Naive thymus-derived CD4-positive, alpha-beta T cell (primary cell): ENCODE measurements at regions of chr1 and their contacts with region 1.

Region 1: GRCh38 chr1:89762779-89763648 is 57.8 kb upstream of the LRRC8D start:
- DNase-seq: peak; percentile 76 to 88 (median 84)
- ATAC-seq: peak; percentile 100
- H3K4me3 ChIP-seq: peak overlapping the region; percentile 59
- H3K4me3 Mint-ChIP-seq: peak overlapping the region; percentile 76 to 96 (median 91)
- H3K27ac ChIP-seq: peak overlapping the region; percentile 50
- H3K27ac Mint-ChIP-seq: peak overlapping the region; percentile 76 to 95 (median 89)
- H3K4me1 ChIP-seq: peaks cover 18 to 37% of the 10 kb centered on the region in 2 donors
- H3K4me1 Mint-ChIP-seq: peaks cover 34 to 57% (median 55%) of the 10 kb centered on the region in 7 donors
- H3K27me3 ChIP-seq: no peaks in the 10 kb centered on the region
- H3K27me3 Mint-ChIP-seq: peaks cover 0 to 4% (median 0%) of the 10 kb centered on the region in 5 donors

Region 2: GRCh38 chr1:89483010-89483756 is 279.8 kb before region 1 on chr1:
- CTCF ChIA-PET with region 1: interaction called, 83 read pairs
- POLR2A ChIA-PET with region 1: interaction called, 4 read pairs
- intact Hi-C with region 1: loop called (anchors 1 kb)
- DNase-seq: peak; percentile 37 to 77 (median 67)
- ATAC-seq: peak; percentile 97
- H3K4me3 ChIP-seq: no peak overlapping the region
- H3K4me3 Mint-ChIP-seq: no peak overlapping the region
- H3K27ac ChIP-seq: no peak overlapping the region
- H3K27ac Mint-ChIP-seq: no peak overlapping the region
- H3K4me1 ChIP-seq: no peaks in the 10 kb centered on the region
- H3K4me1 Mint-ChIP-seq: peaks cover 0 to 18% (median 9%) of the 10 kb centered on the region in 7 donors
- H3K27me3 ChIP-seq: no peaks in the 10 kb centered on the region
- H3K27me3 Mint-ChIP-seq: peaks cover 0 to 5% (median 0%) of the 10 kb centered on the region in 5 donors

Region 3: DNA sequence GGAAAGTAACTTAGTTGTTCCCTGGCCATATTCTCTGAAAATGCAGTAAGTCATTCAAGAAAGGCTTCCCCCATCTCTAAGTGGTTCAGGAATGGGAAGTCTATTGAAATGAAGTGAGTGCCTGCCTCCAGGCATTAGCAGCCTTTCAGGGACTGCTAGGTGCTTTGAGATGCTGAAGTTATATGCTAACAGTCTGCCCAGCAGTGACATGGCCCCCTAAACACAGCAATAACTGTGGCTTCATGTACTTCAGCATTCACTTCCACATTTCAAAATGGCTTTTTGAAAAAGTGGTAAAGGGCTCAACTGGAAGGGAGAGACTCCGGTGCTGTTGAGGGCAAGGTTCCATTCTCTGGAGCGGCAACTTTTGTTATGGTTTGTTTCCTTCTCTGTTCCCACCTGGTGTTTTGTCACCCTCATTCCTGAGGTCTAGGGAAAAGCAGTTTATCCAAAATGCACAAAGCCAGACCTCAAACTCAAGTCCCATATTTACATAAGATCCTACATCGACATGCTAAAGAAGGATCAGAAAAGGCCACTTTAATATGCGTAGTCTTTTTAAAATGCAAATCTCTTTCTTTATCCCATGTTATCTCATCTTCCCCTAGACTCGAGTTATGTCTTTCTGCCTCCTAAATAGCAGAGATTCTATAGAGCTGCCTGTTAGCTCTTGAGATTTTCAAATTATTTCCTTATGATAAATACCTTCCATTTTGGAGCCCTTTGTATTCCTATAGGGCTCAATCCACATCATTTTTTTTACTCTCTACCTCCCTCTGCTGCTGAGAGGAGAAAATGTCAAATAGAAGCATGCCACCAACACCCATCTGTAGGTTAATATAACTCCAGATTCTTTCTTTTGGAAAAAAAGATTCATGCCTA is 164.3 kb before region 1 on chr1:
- CTCF ChIA-PET with region 1: interaction called, 7 read pairs
- POLR2A ChIA-PET with region 1: interaction called, 18 read pairs
- intact Hi-C with region 1: loop called (anchors 1 kb)
- DNase-seq: peak in 5 of 9 donors; percentile 19 to 43 (median 35)
- ATAC-seq: peak; percentile 82
- H3K4me3 ChIP-seq: no peak overlapping the region
- H3K4me3 Mint-ChIP-seq: peak overlapping the region in 8 of 10 donors; percentile 1 to 67 (median 48)
- H3K27ac ChIP-seq: no peak overlapping the region
- H3K27ac Mint-ChIP-seq: peak overlapping the region; percentile 51 to 99 (median 79)
- H3K4me1 ChIP-seq: peaks cover 17 to 55% of the 10 kb centered on the region in 2 donors
- H3K4me1 Mint-ChIP-seq: peaks cover 42 to 98% (median 92%) of the 10 kb centered on the region in 7 donors
- H3K27me3 ChIP-seq: no peaks in the 10 kb centered on the region
- H3K27me3 Mint-ChIP-seq: no peaks in the 10 kb centered on the region

Region 4: DNA sequence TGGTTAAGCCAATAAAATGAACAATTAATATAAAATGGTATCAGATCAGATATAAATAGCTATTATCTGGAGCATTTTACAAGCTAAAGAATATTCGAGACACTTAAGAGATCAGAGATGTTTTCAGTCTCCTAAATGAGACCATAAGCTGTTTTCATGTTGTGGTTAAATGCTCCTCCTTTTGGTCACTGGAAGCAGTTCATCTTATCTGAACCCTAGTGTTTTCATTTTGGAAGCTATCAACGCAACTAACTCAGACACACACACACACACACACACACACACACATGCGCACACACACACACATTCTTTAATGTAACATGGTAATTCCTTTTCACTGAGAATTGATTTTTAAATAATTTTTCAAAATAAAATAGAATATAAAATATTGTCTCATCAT is 140.1 kb before region 1 on chr1:
- CTCF ChIA-PET with region 1: interaction called, 122 read pairs
- POLR2A ChIA-PET with region 1: interaction called, 101 read pairs
- intact Hi-C with region 1: no loop called
- DNase-seq: peak in 5 of 9 donors; percentile 29 to 58 (median 39)
- ATAC-seq: peak; percentile 71
- H3K4me3 ChIP-seq: no peak overlapping the region
- H3K4me3 Mint-ChIP-seq: peak overlapping the region in 3 of 10 donors; percentile 16 to 54 (median 31)
- H3K27ac ChIP-seq: no peak overlapping the region
- H3K27ac Mint-ChIP-seq: peak overlapping the region in 8 of 9 donors; percentile 35 to 98 (median 78)
- H3K4me1 ChIP-seq: peaks cover 9 to 22% of the 10 kb centered on the region in 2 donors
- H3K4me1 Mint-ChIP-seq: peaks cover 15 to 78% (median 61%) of the 10 kb centered on the region in 7 donors
- H3K27me3 ChIP-seq: no peaks in the 10 kb centered on the region
- H3K27me3 Mint-ChIP-seq: no peaks in the 10 kb centered on the region

Region 5: DNA sequence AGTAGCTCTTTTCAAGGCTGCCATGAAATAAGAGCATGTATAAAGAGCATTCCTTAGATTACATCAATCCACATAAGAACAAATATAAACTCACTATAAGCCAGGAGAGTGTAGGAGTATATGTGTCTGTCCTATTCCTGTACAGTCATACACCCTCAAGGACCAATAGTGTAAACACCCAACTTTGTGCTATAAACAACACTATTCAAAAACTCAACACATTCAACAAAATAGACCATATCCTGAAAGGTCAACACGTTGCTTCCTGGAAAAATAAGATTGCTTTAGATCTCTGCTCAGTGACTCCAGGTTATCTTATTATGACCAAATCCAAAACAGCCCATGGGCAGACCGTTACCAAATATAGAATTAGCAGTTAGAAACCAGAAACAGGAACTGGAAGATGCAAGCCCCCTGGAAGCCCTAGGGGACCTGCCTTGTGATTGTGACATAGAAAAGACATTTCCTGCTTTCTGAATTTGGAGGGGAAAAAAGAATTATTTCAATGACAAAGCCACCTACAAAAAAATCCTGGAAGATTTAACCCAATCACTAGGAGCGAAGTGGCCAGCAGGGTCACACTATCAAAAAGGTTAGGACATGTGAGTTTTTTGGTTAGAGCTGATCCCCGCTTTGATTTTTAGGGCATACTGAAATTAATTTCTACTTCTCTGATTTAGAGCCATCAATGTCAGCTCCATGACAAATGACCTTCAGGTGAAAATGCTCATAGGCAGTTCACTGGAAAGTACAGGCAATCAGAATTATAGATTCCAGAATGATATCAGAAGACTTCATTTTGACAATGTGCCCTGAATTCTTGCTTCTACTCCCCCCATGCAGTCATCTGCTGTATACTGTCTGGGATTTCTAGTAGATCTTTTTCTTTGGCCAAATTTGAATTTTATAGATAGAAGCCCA is 70.2 kb before region 1 on chr1:
- CTCF ChIA-PET with region 1: interaction called, 6 read pairs
- POLR2A ChIA-PET with region 1: interaction called, 6 read pairs
- intact Hi-C with region 1: loop called (anchors 2 to 5 kb)
- DNase-seq: no peak
- ATAC-seq: peak; percentile 34
- H3K4me3 ChIP-seq: no peak overlapping the region
- H3K4me3 Mint-ChIP-seq: peak overlapping the region in 7 of 10 donors; percentile 2 to 78 (median 37)
- H3K27ac ChIP-seq: no peak overlapping the region
- H3K27ac Mint-ChIP-seq: peak overlapping the region; percentile 37 to 88 (median 72)
- H3K4me1 ChIP-seq: peaks cover 38 to 50% of the 10 kb centered on the region in 2 donors
- H3K4me1 Mint-ChIP-seq: peaks cover 46 to 98% (median 90%) of the 10 kb centered on the region in 7 donors
- H3K27me3 ChIP-seq: no peaks in the 10 kb centered on the region
- H3K27me3 Mint-ChIP-seq: no peaks in the 10 kb centered on the region

Region 6: DNA sequence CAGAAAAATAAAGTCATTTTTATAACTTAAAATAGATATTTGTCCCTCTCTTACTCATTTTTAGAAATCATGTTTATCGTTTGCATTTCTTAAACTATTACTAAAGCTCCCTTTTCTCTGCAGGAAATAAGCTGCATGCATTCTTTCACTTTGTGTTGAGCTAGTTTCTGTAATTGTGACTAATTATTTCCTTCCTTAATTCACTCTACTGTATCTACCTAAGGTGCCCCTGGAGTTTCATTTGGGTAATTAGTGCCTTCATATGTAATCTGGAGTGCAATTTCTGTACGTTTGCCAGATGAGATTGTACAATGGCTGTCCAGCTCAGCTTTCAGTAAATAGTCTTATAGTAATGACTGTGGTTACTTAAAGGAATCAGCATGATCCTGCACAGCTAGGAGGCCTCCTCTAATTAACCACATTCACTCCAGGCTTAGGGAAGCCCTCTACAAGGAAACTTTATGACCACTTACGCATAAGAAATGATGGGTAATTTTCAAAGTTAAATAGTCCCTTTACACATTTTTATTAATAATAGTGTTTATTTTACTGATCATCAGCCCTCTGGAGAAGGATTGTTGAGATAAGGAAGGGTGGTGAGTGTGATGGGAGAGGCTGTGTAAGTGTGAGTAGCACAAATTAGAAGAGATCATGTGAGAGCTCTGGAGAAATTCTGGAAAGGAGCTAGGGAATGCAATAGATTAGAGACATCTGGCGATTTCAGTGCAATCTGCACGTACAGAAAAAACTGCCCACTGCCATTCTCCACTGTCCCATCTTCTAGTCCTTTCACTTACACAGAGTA is 43.3 kb before region 1 on chr1:
- CTCF ChIA-PET with region 1: interaction called, 18 read pairs
- POLR2A ChIA-PET with region 1: interaction called, 6 read pairs
- intact Hi-C with region 1: loop called (anchors 1 to 5 kb)
- DNase-seq: no peak
- ATAC-seq: peak; percentile 77
- H3K4me3 ChIP-seq: no peak overlapping the region
- H3K4me3 Mint-ChIP-seq: peak overlapping the region in 9 of 10 donors; percentile 1 to 82 (median 48)
- H3K27ac ChIP-seq: peak overlapping the region; percentile 10
- H3K27ac Mint-ChIP-seq: peak overlapping the region; percentile 1 to 97 (median 66)
- H3K4me1 ChIP-seq: peaks cover 27 to 57% of the 10 kb centered on the region in 2 donors
- H3K4me1 Mint-ChIP-seq: peaks cover 34 to 82% (median 75%) of the 10 kb centered on the region in 7 donors
- H3K27me3 ChIP-seq: no peaks in the 10 kb centered on the region
- H3K27me3 Mint-ChIP-seq: no peaks in the 10 kb centered on the region

Region 7: GRCh38 chr1:90039652-90040051 is 276.6 kb after region 1 on chr1:
- CTCF ChIA-PET with region 1: no interaction called
- POLR2A ChIA-PET with region 1: interaction called, 10 read pairs
- intact Hi-C with region 1: no loop called
- DNase-seq: no peak
- ATAC-seq: no peak
- H3K4me3 ChIP-seq: no peak overlapping the region
- H3K4me3 Mint-ChIP-seq: no peak overlapping the region
- H3K27ac ChIP-seq: no peak overlapping the region
- H3K27ac Mint-ChIP-seq: no peak overlapping the region
- H3K4me1 ChIP-seq: no peaks in the 10 kb centered on the region
- H3K4me1 Mint-ChIP-seq: peaks cover 0 to 2% (median 0%) of the 10 kb centered on the region in 7 donors
- H3K27me3 ChIP-seq: no peaks in the 10 kb centered on the region
- H3K27me3 Mint-ChIP-seq: peaks cover 0 to 3% (median 0%) of the 10 kb centered on the region in 5 donors